ENCODE measurements at regions of chr2 and their contacts with region 1.

Region 1: GRCh38 chr2:171518893-171519292 is 3.4 kb upstream of the CYBRD1 start:
- DNase-seq: no peak

Region 2: GRCh38 chr2:171460537-171460936 is 58.4 kb before region 1 on chr2:
- intact Hi-C with region 1: loop called in 1 of 2 experiments (anchors 2 kb)
- DNase-seq: no peak

Region 3: GRCh38 chr2:171598713-171599319 is 79.9 kb after region 1 on chr2:
- intact Hi-C with region 1: no loop called
- DNase-seq: no peak